CD8-positive, alpha-beta T cell (primary cell): ENCODE measurements at regions of chr21 and their contacts with region 1.

Region 1: GRCh38 chr21:14737922-14738321 is 191.8 kb upstream of the SAMSN1 start:
- DNase-seq: peak in 8 of 9 experiments; percentile 11 to 84 (median 47)
- ATAC-seq: peak; percentile 96
- H3K4me3 ChIP-seq: no peak overlapping the region
- H3K4me3 Mint-ChIP-seq: no peak overlapping the region
- H3K27ac ChIP-seq: no peak overlapping the region
- H3K27ac Mint-ChIP-seq: no peak overlapping the region
- H3K4me1 ChIP-seq: no peaks in the 10 kb centered on the region
- H3K4me1 Mint-ChIP-seq: peaks cover 5% of the 10 kb centered on the region
- H3K27me3 ChIP-seq: no peaks in the 10 kb centered on the region
- H3K27me3 Mint-ChIP-seq: no peaks in the 10 kb centered on the region
- CTCF ChIP-seq: peak; percentile 85

Region 2: GRCh38 chr21:14259747-14260146 is 478.2 kb before region 1 on chr21:
- CTCF ChIA-PET with region 1: interaction called, 5 read pairs
- POLR2A ChIA-PET with region 1: no interaction called
- intact Hi-C with region 1: loop called (anchors 1 to 5 kb)
- DNase-seq: peak in 2 of 9 experiments; percentile 39 to 55
- ATAC-seq: peak; percentile 54
- H3K4me3 ChIP-seq: no peak overlapping the region
- H3K4me3 Mint-ChIP-seq: no peak overlapping the region
- H3K27ac ChIP-seq: no peak overlapping the region
- H3K27ac Mint-ChIP-seq: no peak overlapping the region
- H3K4me1 ChIP-seq: no peaks in the 10 kb centered on the region
- H3K4me1 Mint-ChIP-seq: no peaks in the 10 kb centered on the region
- H3K27me3 ChIP-seq: no peaks in the 10 kb centered on the region
- H3K27me3 Mint-ChIP-seq: no peaks in the 10 kb centered on the region
- CTCF ChIP-seq: peak; percentile 62

Region 3: DNA sequence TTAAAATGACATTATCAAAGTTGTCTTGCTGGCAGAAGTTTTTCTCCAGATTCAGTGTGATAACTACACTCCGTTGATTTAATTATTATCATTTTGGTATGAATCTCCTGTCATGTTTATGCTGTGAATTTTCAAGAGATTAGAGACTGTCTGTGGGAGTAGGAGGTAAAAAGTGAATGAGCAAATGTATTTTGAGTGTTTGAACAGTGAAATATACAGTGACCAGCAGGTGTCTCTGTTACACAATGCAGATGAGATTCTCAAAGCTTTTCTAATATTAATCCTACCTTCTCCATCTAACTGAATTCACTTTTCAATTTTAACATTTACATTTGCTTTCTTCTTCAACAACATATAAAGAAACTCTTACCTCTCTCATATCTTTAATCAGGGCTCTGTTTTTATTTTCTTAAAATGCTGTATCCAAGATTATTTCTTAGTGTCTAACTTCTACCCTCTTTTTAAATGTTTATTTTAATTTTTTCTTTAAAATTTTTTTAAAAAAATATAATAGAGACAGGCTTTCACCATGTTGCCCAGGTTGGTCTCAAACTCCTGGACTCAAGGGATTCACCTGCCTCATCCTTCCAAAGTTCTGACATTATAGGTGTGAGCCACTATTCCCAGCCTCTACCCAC is 334.1 kb before region 1 on chr21:
- CTCF ChIA-PET with region 1: interaction called, 11 read pairs
- POLR2A ChIA-PET with region 1: no interaction called
- intact Hi-C with region 1: loop called (anchors 1 kb)
- DNase-seq: peak in 2 of 9 experiments; percentile 54 to 68
- ATAC-seq: peak; percentile 74
- H3K4me3 ChIP-seq: no peak overlapping the region
- H3K4me3 Mint-ChIP-seq: no peak overlapping the region
- H3K27ac ChIP-seq: no peak overlapping the region
- H3K27ac Mint-ChIP-seq: no peak overlapping the region
- H3K4me1 ChIP-seq: no peaks in the 10 kb centered on the region
- H3K4me1 Mint-ChIP-seq: no peaks in the 10 kb centered on the region
- H3K27me3 ChIP-seq: no peaks in the 10 kb centered on the region
- H3K27me3 Mint-ChIP-seq: no peaks in the 10 kb centered on the region
- CTCF ChIP-seq: peak; percentile 75

Region 4: DNA sequence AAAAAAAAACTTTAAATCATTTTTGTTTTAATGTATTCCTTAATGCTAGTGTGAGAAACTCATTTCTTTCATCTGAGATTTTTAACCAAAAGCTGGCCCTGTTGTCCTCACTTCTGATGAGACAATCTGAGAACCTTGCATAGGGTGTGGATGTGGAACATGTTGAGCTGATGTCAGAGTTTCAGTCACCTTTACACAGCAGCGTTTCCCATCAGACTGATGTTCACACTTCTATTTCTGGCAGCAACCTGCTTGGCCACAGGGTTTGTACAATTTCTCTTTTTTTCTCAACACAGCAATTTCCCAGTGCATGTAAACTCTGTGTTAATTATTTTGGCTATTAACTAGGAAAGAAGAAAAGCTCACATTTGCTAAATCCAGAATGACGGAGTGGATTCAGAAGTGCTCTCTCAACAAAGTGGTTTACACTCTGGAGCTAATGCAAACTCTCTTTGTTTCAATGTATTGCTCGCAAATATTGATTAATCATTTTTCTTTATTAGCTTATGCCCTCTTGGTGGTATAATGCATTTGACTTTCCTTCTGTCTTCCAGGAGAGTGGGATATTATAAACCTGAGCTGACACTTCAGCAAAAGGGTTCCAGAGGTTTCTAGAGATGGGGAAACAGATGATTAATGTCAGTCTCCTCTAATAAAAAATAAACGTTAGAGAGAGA is 284.4 kb before region 1 on chr21:
- CTCF ChIA-PET with region 1: interaction called, 20 read pairs
- POLR2A ChIA-PET with region 1: no interaction called
- intact Hi-C with region 1: no loop called
- DNase-seq: peak in 2 of 9 experiments; percentile 5 to 26
- ATAC-seq: peak; percentile 44
- H3K4me3 ChIP-seq: no peak overlapping the region
- H3K4me3 Mint-ChIP-seq: no peak overlapping the region
- H3K27ac ChIP-seq: no peak overlapping the region
- H3K27ac Mint-ChIP-seq: no peak overlapping the region
- H3K4me1 ChIP-seq: no peaks in the 10 kb centered on the region
- H3K4me1 Mint-ChIP-seq: peaks cover 13% of the 10 kb centered on the region
- H3K27me3 ChIP-seq: no peaks in the 10 kb centered on the region
- H3K27me3 Mint-ChIP-seq: no peaks in the 10 kb centered on the region
- CTCF ChIP-seq: no peak

Region 5: DNA sequence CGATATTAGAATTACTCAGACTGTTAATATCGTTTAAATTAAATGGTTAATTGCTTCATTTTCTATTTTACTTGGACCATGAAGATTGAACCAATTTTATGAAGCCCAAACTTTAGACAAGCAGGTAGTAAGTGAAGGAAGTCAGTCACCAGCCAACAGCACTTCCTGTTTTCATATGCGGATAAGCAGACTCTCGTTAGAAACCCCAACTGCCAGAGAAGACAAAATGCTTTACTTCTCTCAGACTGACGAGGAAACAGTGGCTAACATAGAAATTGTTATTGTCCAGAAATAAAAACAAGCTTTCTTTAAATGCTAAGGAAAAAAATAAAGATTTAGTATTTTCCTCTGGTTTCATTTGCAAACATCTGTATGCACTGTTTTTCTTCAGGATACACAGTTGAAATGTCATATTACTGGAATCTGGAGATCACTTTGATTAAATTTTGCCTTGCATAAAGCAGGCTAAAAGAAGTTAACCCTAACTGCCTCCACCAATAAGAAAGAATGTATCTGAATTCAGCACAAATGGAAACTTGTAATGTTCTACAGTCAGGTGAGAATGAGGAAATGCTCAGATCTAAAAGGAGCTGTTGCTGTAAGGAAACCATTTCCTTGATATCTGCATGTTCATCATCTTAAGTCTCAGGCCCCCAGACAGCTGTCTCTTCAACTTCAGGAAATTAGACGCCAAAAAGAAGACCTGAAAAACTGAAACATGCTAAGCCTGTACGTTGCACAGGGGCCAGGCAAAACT is 62.0 kb before region 1 on chr21:
- CTCF ChIA-PET with region 1: interaction called, 4 read pairs
- POLR2A ChIA-PET with region 1: no interaction called
- intact Hi-C with region 1: loop called in 1 of 2 experiments (anchors 5 kb)
- DNase-seq: peak in 7 of 9 experiments; percentile 4 to 77 (median 26)
- ATAC-seq: peak; percentile 90
- H3K4me3 ChIP-seq: no peak overlapping the region
- H3K4me3 Mint-ChIP-seq: peak overlapping the region; percentile 45
- H3K27ac ChIP-seq: peak overlapping the region; percentile 45 to 85
- H3K27ac Mint-ChIP-seq: peak overlapping the region; percentile 93
- H3K4me1 ChIP-seq: peaks cover 31% of the 10 kb centered on the region
- H3K4me1 Mint-ChIP-seq: peaks cover 52% of the 10 kb centered on the region
- H3K27me3 ChIP-seq: no peaks in the 10 kb centered on the region
- H3K27me3 Mint-ChIP-seq: no peaks in the 10 kb centered on the region
- CTCF ChIP-seq: no peak

Region 6: DNA sequence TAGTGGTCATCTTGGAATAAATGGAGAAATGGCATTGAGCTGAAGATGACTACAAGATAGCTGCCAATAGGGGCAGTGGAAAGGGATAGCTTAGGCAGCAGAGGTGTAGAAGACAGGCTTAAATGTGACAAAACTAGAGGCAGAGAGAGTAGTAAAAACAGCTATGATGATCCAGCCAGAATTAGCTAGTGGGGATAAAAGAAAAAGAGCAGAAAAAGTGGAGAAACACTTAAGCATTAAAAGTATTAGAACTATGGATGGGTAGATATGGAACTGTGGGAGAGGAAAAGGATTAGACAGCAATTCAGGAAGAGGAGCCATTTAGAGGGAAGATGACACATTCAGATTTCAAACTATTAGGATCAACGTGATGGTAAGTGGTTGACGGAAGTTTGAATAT is 10.7 kb after region 1 on chr21:
- CTCF ChIA-PET with region 1: interaction called, 11 read pairs
- POLR2A ChIA-PET with region 1: no interaction called
- intact Hi-C with region 1: no loop called
- DNase-seq: no peak
- ATAC-seq: no peak
- H3K4me3 ChIP-seq: no peak overlapping the region
- H3K4me3 Mint-ChIP-seq: no peak overlapping the region
- H3K27ac ChIP-seq: no peak overlapping the region
- H3K27ac Mint-ChIP-seq: no peak overlapping the region
- H3K4me1 ChIP-seq: no peaks in the 10 kb centered on the region
- H3K4me1 Mint-ChIP-seq: no peaks in the 10 kb centered on the region
- H3K27me3 ChIP-seq: peaks cover 0 to 3% of the 10 kb centered on the region in 2 experiments
- H3K27me3 Mint-ChIP-seq: peaks cover 5% of the 10 kb centered on the region
- CTCF ChIP-seq: no peak